OCI-LY7 (cell line): ENCODE measurements at regions of chr3 and their contacts with region 1.

Region 1: GRCh38 chr3:44913868-44914468 is 39.6 kb downstream of the TGM4 start:
- DNase-seq: peak; percentile 69
- H3K4me3 ChIP-seq: no peak overlapping the region
- H3K27ac ChIP-seq: no peak overlapping the region
- H3K4me1 ChIP-seq: no peaks in the 10 kb centered on the region
- CTCF ChIP-seq: peak; percentile 90

Region 2: GRCh38 chr3:44323341-44323955 is 590.5 kb before region 1 on chr3:
- CTCF ChIA-PET with region 1: no interaction called
- POLR2A ChIA-PET with region 1: no interaction called
- intact Hi-C with region 1: loop called (anchors 5 kb)
- DNase-seq: peak; percentile 54
- H3K4me3 ChIP-seq: no peak overlapping the region
- H3K27ac ChIP-seq: no peak overlapping the region
- H3K4me1 ChIP-seq: no peaks in the 10 kb centered on the region
- CTCF ChIP-seq: peak; percentile 97

Region 3: GRCh38 chr3:44529927-44530326 is 384.0 kb before region 1 on chr3:
- CTCF ChIA-PET with region 1: no interaction called
- POLR2A ChIA-PET with region 1: no interaction called
- intact Hi-C with region 1: loop called (anchors 1 kb)
- DNase-seq: peak; percentile 20
- H3K4me3 ChIP-seq: no peak overlapping the region
- H3K27ac ChIP-seq: no peak overlapping the region
- H3K4me1 ChIP-seq: no peaks in the 10 kb centered on the region
- CTCF ChIP-seq: peak; percentile 69